ENCODE measurements at regions of chr10 and their contacts with region 1.

Region 1: DNA sequence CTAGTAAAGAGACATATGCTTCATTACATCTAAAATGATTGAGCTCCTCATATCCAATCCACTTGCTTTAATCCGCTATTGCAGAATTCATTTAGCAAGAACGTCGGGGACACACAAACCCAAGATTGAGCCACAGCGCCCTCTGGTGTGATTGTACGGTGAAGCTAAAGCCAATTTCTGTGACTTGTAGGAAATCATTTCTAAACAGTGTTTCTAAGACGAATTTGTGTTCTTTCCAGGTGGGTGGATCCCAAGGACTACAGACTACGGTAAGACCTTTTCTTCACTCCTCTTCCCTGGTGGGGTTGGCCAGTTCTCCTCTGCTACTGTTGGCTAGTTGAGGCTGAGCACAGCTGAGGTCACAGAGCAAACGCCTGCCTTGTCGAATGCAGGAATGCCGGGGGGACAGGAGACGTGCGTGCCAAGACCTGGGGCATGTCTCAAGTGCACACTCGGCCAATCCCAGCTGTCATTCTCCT is 5.2 kb downstream of the DMBT1 start:
- DNase-seq: peak; percentile 58 to 82
- H3K4me3 ChIP-seq: no peak overlapping the region
- H3K4me1 ChIP-seq: no peaks in the 10 kb centered on the region
- H3K27me3 ChIP-seq: peaks cover 39% of the 10 kb centered on the region

Region 2: GRCh38 chr10:122298598-122299301 is 267.0 kb before region 1 on chr10:
- in situ Hi-C with region 1: loop called (anchors 5 kb)
- DNase-seq: peak; percentile 70 to 80
- H3K4me3 ChIP-seq: 0 out of 2 replicates have a peak overlapping the region, but pooled peaks have one; percentile 6
- H3K4me1 ChIP-seq: no peaks in the 10 kb centered on the region
- H3K27me3 ChIP-seq: no peaks in the 10 kb centered on the region

Region 3: GRCh38 chr10:122953827-122954730 is 388.3 kb after region 1 on chr10 and contains the start of gene C10orf88:
- in situ Hi-C with region 1: no loop called
- DNase-seq: peak; percentile 95 to 97
- H3K4me3 ChIP-seq: peak within 1 kb of the TSS; percentile 89
- H3K4me1 ChIP-seq: peaks cover 7% of the 10 kb centered on the region
- H3K27me3 ChIP-seq: no peaks in the 10 kb centered on the region